B cell (primary cell): ENCODE measurements at regions of chr10 and their contacts with region 1.

Region 1: DNA sequence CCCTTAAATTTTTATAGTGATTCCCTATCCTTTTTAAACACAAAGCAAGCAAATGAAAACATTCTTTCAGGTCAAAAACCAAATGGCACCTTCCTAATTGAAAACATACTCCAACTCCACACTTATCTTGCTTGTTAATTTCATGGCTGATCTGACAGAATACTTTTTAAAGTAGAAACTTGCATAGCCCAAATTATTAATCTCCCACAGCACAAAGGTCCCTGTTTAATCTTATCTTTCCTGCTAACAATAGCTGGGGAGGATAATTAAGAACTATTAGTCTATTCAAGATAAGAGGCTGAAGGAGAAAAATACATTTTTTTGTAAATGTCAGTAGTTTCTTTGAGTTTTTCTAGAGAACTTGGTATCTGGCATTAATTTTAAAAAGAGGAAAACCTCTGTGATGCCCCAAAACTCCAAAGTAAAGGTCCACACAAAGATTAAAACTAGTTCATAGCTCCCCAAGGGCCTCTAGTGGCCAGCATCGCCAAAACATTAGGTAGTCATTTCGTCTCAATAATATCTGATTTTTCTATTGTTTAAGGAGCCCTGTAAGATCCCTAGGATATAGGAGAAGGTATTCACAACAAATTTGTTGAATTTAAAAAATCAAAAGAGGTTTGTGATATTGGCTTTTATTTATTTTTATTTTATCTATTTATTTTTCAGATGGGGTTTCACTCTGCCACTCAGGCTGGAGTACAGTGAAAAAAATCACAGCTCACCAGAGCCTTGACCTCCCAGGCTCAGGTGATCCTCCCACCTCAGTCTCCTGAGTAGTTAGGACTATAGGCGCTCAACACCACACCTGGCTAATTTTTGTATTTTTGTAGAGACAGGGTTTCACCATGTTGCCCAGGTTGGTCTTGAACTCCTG is 14.7 kb downstream of the CDNF start:
- DNase-seq: peak; percentile 69
- ATAC-seq: peak; percentile 78
- H3K4me3 ChIP-seq: no peak overlapping the region
- H3K4me3 Mint-ChIP-seq: no peak overlapping the region
- H3K27ac ChIP-seq: no peak overlapping the region
- H3K27ac Mint-ChIP-seq: no peak overlapping the region
- H3K4me1 ChIP-seq: peaks cover 16 to 19% of the 10 kb centered on the region in 2 donors
- H3K4me1 Mint-ChIP-seq: peaks cover 32% of the 10 kb centered on the region
- H3K27me3 ChIP-seq: no peaks in the 10 kb centered on the region
- H3K27me3 Mint-ChIP-seq: no peaks in the 10 kb centered on the region
- CTCF ChIP-seq: peak; percentile 83

Region 2: GRCh38 chr10:14500172-14500765 is 322.8 kb before region 1 on chr10:
- CTCF ChIA-PET with region 1: interaction called, 29 read pairs
- POLR2A ChIA-PET with region 1: no interaction called
- intact Hi-C with region 1: loop called (anchors 1 kb)
- DNase-seq: no peak
- ATAC-seq: no peak
- H3K4me3 ChIP-seq: no peak overlapping the region
- H3K4me3 Mint-ChIP-seq: no peak overlapping the region
- H3K27ac ChIP-seq: no peak overlapping the region
- H3K27ac Mint-ChIP-seq: no peak overlapping the region
- H3K4me1 ChIP-seq: peaks cover 13 to 16% of the 10 kb centered on the region in 2 donors
- H3K4me1 Mint-ChIP-seq: peaks cover 27% of the 10 kb centered on the region
- H3K27me3 ChIP-seq: no peaks in the 10 kb centered on the region
- H3K27me3 Mint-ChIP-seq: no peaks in the 10 kb centered on the region
- CTCF ChIP-seq: no peak

Region 3: GRCh38 chr10:14543046-14543903 is 279.8 kb before region 1 on chr10:
- CTCF ChIA-PET with region 1: interaction called, 71 read pairs
- POLR2A ChIA-PET with region 1: no interaction called
- intact Hi-C with region 1: no loop called
- DNase-seq: no peak
- ATAC-seq: no peak
- H3K4me3 ChIP-seq: no peak overlapping the region
- H3K4me3 Mint-ChIP-seq: peak overlapping the region; percentile 40
- H3K27ac ChIP-seq: peak overlapping the region; percentile 53 to 56
- H3K27ac Mint-ChIP-seq: peak overlapping the region; percentile 81
- H3K4me1 ChIP-seq: peaks cover 25 to 28% of the 10 kb centered on the region in 2 donors
- H3K4me1 Mint-ChIP-seq: peaks cover 77% of the 10 kb centered on the region
- H3K27me3 ChIP-seq: no peaks in the 10 kb centered on the region
- H3K27me3 Mint-ChIP-seq: no peaks in the 10 kb centered on the region
- CTCF ChIP-seq: peak; percentile 32

Region 4: DNA sequence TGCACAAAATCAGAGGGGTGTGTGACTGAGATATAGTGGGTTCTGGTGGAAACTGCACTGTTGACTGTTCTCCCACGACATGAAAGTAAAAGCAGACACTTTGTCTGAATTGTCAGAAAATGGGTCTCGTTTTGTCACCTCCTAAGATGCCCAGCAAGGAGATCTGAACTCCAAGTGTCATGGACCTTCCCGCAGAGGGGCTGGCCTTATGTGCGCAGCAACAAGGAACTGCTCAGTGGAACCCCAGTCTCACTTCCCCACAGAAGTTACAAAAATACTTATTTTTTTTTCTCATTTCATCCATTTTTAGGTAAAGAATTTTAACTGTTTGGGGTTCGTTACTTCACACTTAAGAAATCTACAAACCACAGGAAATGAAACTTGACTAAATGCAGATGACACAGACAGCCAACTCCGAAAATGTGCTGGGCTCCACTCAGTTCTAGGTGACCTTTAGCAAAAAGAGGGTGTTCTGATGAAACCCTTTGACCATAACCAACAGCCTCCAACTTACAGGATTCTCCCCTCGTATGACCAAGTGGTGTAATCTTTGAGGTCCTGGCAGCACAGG is 163.4 kb before region 1 on chr10:
- CTCF ChIA-PET with region 1: interaction called, 6 read pairs
- POLR2A ChIA-PET with region 1: no interaction called
- intact Hi-C with region 1: loop called (anchors 5 kb)
- DNase-seq: peak; percentile 81
- ATAC-seq: peak; percentile 75
- H3K4me3 ChIP-seq: peak overlapping the region in 3 of 5 experiments; percentile 2 to 45 (median 3)
- H3K4me3 Mint-ChIP-seq: peak overlapping the region; percentile 66
- H3K27ac ChIP-seq: peak overlapping the region; percentile 72 to 88
- H3K27ac Mint-ChIP-seq: peak overlapping the region; percentile 94
- H3K4me1 ChIP-seq: peaks cover 63 to 71% of the 10 kb centered on the region in 2 donors
- H3K4me1 Mint-ChIP-seq: peaks cover 87% of the 10 kb centered on the region
- H3K27me3 ChIP-seq: no peaks in the 10 kb centered on the region
- H3K27me3 Mint-ChIP-seq: no peaks in the 10 kb centered on the region
- CTCF ChIP-seq: no peak

Region 5: DNA sequence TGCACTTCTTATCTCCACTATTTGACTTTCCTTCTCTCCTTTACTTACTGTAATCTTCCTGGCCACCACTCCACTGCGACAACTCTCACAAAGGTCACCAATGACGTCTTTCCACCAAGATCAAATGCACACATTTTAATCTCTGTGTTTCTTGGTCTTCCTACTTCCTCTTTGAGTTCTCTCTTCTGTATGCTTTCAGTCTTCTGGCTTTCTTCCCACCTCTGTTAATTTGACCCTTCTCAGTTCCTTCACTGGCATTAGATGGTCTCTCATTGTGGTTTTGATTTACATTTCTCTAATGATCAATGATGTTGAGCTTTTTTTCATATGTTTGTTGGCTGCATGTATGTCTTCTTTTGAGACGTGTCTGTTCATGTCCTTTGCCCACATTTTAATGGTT is 80.3 kb before region 1 on chr10:
- CTCF ChIA-PET with region 1: interaction called, 21 read pairs
- POLR2A ChIA-PET with region 1: no interaction called
- intact Hi-C with region 1: no loop called
- DNase-seq: peak; percentile 78
- ATAC-seq: peak; percentile 83
- H3K4me3 ChIP-seq: peak overlapping the region in 1 of 5 experiments; percentile 14
- H3K4me3 Mint-ChIP-seq: peak overlapping the region; percentile 74
- H3K27ac ChIP-seq: peak overlapping the region; percentile 93 to 98
- H3K27ac Mint-ChIP-seq: peak overlapping the region; percentile 88
- H3K4me1 ChIP-seq: peaks cover 71 to 76% of the 10 kb centered on the region in 2 donors
- H3K4me1 Mint-ChIP-seq: peaks cover 83% of the 10 kb centered on the region
- H3K27me3 ChIP-seq: no peaks in the 10 kb centered on the region
- H3K27me3 Mint-ChIP-seq: no peaks in the 10 kb centered on the region
- CTCF ChIP-seq: no peak

Region 6: GRCh38 chr10:15097011-15097812 is 274.1 kb after region 1 on chr10 and contains the start of gene RPP38:
- CTCF ChIA-PET with region 1: no interaction called
- POLR2A ChIA-PET with region 1: no interaction called
- intact Hi-C with region 1: no loop called
- DNase-seq: peak; percentile 98
- ATAC-seq: peak; percentile 75
- H3K4me3 ChIP-seq: peak within 1 kb of the TSS; percentile 80 to 91 (median 87)
- H3K4me3 Mint-ChIP-seq: peak within 1 kb of the TSS; percentile 93
- H3K27ac ChIP-seq: peak within 1 kb of the TSS; percentile 92 to 96
- H3K27ac Mint-ChIP-seq: peak within 1 kb of the TSS; percentile 94
- H3K4me1 ChIP-seq: peaks cover 23 to 27% of the 10 kb centered on the region in 2 donors
- H3K4me1 Mint-ChIP-seq: peaks cover 26% of the 10 kb centered on the region
- H3K27me3 ChIP-seq: no peaks in the 10 kb centered on the region
- H3K27me3 Mint-ChIP-seq: no peaks in the 10 kb centered on the region
- CTCF ChIP-seq: no peak
- total RNA-seq, gene RPP38: 24.5 and 24.8 TPM in 2 replicates